CD4-positive, alpha-beta memory T cell (primary cell): ENCODE measurements at regions of chr1 and their contacts with region 1.

Region 1: DNA sequence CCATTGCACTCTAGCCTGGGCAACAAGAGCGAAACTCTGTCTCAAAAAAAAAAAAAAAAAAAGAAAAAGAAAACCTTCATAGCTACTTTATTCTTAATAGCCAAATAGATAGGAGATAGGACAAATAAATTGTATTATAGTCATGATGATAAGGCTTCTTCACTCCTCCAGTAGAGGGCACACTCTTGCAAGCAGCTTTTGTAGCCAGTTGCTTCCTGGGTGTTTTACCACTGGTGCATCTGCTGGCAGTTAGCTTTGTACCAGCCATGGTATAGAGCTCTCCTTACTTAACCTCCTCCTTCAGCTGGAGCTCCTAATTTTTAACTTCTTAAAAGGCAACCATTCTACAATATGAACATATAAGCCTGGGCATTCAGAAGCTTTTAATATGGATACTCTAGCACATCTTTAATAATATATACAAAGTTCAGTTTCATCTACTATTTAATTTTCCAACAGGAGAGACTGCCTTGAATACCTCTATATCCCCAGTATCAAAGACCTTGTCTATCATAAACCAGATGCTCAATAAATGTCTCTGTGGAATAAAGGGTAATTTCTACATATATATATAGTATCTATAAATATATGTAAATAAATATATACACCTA is 35.8 kb downstream of the EVI5 start:
- DNase-seq: peak; percentile 30 to 45 (median 38)
- H3K4me3 ChIP-seq: no peak overlapping the region
- H3K4me3 Mint-ChIP-seq: no peak overlapping the region
- H3K27ac ChIP-seq: no peak overlapping the region
- H3K27ac Mint-ChIP-seq: no peak overlapping the region
- H3K4me1 ChIP-seq: no peaks in the 10 kb centered on the region
- H3K4me1 Mint-ChIP-seq: no peaks in the 10 kb centered on the region
- H3K27me3 ChIP-seq: no peaks in the 10 kb centered on the region
- H3K27me3 Mint-ChIP-seq: peaks cover 0 to 4% of the 10 kb centered on the region in 2 donors

Region 2: DNA sequence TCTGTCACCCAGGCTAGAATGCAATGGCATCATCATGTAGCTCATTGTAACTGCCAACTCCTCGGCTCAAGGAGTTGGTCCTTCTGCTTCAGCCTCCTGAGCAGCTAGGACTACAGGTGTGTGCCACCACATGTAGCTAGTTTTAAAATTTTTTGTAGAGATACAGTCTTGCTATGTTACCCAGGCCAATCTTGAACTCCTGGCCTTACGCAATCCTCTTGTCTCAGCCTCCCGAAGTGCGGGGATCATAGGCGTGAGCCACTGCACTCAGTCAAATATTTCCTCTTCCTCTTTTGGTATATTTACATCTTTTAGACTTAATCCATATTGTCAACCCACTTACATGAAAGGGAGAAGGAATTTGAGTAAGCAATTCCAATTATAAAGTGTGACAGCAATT is 85.4 kb before region 1 on chr1:
- CTCF ChIA-PET with region 1: no interaction called
- POLR2A ChIA-PET with region 1: no interaction called
- intact Hi-C with region 1: no loop called
- DNase-seq: no peak
- H3K4me3 ChIP-seq: no peak overlapping the region
- H3K4me3 Mint-ChIP-seq: no peak overlapping the region
- H3K27ac ChIP-seq: no peak overlapping the region
- H3K27ac Mint-ChIP-seq: no peak overlapping the region
- H3K4me1 ChIP-seq: no peaks in the 10 kb centered on the region
- H3K4me1 Mint-ChIP-seq: no peaks in the 10 kb centered on the region
- H3K27me3 ChIP-seq: no peaks in the 10 kb centered on the region
- H3K27me3 Mint-ChIP-seq: no peaks in the 10 kb centered on the region

Region 3: GRCh38 chr1:92736395-92736794 is 12.7 kb before region 1 on chr1:
- CTCF ChIA-PET with region 1: interaction called, 10 read pairs
- POLR2A ChIA-PET with region 1: no interaction called
- intact Hi-C with region 1: no loop called
- DNase-seq: no peak
- H3K4me3 ChIP-seq: no peak overlapping the region
- H3K4me3 Mint-ChIP-seq: no peak overlapping the region
- H3K27ac ChIP-seq: no peak overlapping the region
- H3K27ac Mint-ChIP-seq: no peak overlapping the region
- H3K4me1 ChIP-seq: no peaks in the 10 kb centered on the region
- H3K4me1 Mint-ChIP-seq: no peaks in the 10 kb centered on the region
- H3K27me3 ChIP-seq: no peaks in the 10 kb centered on the region
- H3K27me3 Mint-ChIP-seq: peaks cover 7 to 9% of the 10 kb centered on the region in 2 donors

Region 4: GRCh38 chr1:92764116-92764515 is 15.0 kb after region 1 on chr1:
- CTCF ChIA-PET with region 1: interaction called, 10 read pairs
- POLR2A ChIA-PET with region 1: no interaction called
- intact Hi-C with region 1: no loop called
- DNase-seq: no peak
- H3K4me3 ChIP-seq: no peak overlapping the region
- H3K4me3 Mint-ChIP-seq: no peak overlapping the region
- H3K27ac ChIP-seq: no peak overlapping the region
- H3K27ac Mint-ChIP-seq: no peak overlapping the region
- H3K4me1 ChIP-seq: no peaks in the 10 kb centered on the region
- H3K4me1 Mint-ChIP-seq: no peaks in the 10 kb centered on the region
- H3K27me3 ChIP-seq: no peaks in the 10 kb centered on the region
- H3K27me3 Mint-ChIP-seq: peaks cover 0 to 2% of the 10 kb centered on the region in 2 donors

Region 5: DNA sequence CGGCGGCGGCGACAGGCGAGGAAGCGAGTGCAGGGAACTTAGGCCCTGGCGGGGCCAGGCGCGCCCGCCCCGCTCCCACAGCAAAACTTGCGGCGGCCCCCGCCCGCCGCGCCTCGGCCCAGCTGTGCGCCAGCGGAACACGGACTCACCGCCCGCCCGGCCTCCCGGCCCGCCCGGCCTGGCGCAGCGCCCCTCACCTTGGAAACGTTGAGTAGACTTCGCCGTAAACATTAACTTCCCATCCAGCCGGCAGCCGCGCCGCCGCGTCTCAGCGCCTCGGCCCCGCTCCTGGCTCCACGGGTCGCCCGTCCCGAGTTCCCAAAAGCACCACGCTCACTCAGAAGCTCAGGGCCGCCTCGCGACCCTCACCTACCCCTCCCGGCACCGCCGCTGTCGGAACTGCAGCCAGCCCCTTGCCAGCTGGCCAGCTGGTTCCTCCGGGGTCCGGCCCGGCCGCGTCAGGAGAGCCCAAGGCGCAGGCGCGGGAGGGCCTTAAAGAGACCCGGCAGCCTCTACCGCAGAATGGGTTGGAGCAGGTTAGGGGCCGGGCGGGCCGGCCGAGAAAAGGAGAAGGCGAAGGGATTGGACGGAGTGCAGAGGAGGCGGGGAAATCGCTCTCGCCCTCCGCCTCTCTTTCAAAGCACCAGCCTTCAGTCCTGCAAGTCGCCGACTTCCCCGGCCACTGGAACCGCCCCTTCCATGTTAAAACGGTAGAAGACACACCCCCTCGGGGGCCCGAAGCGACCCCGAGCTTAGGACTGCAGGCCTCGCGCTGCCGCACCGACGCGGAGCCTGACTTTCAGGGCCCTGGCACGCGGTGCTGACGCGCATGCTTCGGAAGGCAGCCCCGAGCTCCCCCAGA is 35.7 kb after region 1 on chr1 and contains the start of gene EVI5:
- CTCF ChIA-PET with region 1: interaction called, 9 read pairs
- POLR2A ChIA-PET with region 1: no interaction called
- intact Hi-C with region 1: loop called (anchors 2 kb)
- DNase-seq: peak; percentile 54 to 61 (median 57)
- H3K4me3 ChIP-seq: peak within 1 kb of the TSS; percentile 42 to 57
- H3K4me3 Mint-ChIP-seq: peak within 1 kb of the TSS; percentile 76 to 89 (median 82)
- H3K27ac ChIP-seq: no peak within 1 kb of the TSS
- H3K27ac Mint-ChIP-seq: peak within 1 kb of the TSS in 5 of 7 donors; percentile 15 to 68 (median 52)
- H3K4me1 ChIP-seq: peaks cover 25% of the 10 kb centered on the region
- H3K4me1 Mint-ChIP-seq: peaks cover 12 to 32% (median 18%) of the 10 kb centered on the region in 4 donors
- H3K27me3 ChIP-seq: peaks cover 12% of the 10 kb centered on the region
- H3K27me3 Mint-ChIP-seq: peaks cover 26 to 41% of the 10 kb centered on the region in 2 donors
- total RNA-seq, gene EVI5: 0.93 to 1.7 TPM

Region 6: DNA sequence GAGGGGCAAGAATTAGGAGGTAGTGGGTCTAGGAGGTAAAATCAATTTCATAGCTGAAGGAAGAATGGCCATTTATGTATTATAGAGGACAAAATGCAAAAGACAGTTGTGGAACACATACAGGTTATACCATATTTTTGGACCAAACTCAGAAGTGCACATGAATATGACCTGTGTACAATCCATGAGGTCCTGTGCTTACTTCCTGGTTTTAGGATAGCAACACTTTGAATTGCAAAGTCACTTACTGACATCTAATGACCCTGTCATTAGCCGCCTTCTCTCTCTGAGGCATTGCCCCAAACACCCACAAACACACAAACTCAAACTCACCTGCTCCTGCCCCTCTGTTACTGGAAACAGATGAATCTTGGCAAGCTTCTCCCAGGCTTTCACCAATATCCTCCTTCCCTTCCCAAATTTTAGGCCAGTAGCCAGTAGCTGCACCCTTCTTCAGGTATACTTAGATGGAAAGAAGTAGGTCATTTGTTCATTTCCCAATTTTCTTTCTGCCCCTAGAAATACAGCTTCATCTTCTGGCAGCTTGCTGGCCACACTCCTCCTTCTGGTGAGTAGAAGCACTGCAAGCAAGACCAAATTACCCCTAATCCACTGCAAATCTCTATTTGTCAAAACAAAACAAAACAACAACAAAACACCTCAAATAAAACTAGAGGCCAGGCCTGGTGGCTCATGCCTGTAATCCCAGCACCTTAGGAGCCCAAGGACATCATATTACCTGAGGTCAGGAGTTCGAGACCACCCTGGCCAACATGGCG is 69.0 kb after region 1 on chr1:
- CTCF ChIA-PET with region 1: interaction called, 72 read pairs
- POLR2A ChIA-PET with region 1: no interaction called
- intact Hi-C with region 1: loop called (anchors 1 kb)
- DNase-seq: peak in 4 of 5 donors; percentile 16 to 43 (median 26)
- H3K4me3 ChIP-seq: no peak overlapping the region
- H3K4me3 Mint-ChIP-seq: no peak overlapping the region
- H3K27ac ChIP-seq: no peak overlapping the region
- H3K27ac Mint-ChIP-seq: peak overlapping the region in 1 of 7 donors; percentile 3
- H3K4me1 ChIP-seq: no peaks in the 10 kb centered on the region
- H3K4me1 Mint-ChIP-seq: peaks cover 0 to 3% (median 0%) of the 10 kb centered on the region in 4 donors
- H3K27me3 ChIP-seq: no peaks in the 10 kb centered on the region
- H3K27me3 Mint-ChIP-seq: peaks cover 4 to 10% of the 10 kb centered on the region in 2 donors

Region 7: GRCh38 chr1:92864131-92864530 is 115.0 kb after region 1 on chr1:
- CTCF ChIA-PET with region 1: no interaction called
- POLR2A ChIA-PET with region 1: no interaction called
- intact Hi-C with region 1: no loop called
- DNase-seq: no peak
- H3K4me3 ChIP-seq: no peak overlapping the region
- H3K4me3 Mint-ChIP-seq: no peak overlapping the region
- H3K27ac ChIP-seq: no peak overlapping the region
- H3K27ac Mint-ChIP-seq: peak overlapping the region in 3 of 7 donors; percentile 24 to 57 (median 37)
- H3K4me1 ChIP-seq: peaks cover 10% of the 10 kb centered on the region
- H3K4me1 Mint-ChIP-seq: peaks cover 4 to 7% (median 4%) of the 10 kb centered on the region in 4 donors
- H3K27me3 ChIP-seq: no peaks in the 10 kb centered on the region
- H3K27me3 Mint-ChIP-seq: no peaks in the 10 kb centered on the region